Left ventricle myocardium inferior (tissue), 1 donor: ENCODE measurements at regions of chr22 and their contacts with region 1.

Region 1: DNA sequence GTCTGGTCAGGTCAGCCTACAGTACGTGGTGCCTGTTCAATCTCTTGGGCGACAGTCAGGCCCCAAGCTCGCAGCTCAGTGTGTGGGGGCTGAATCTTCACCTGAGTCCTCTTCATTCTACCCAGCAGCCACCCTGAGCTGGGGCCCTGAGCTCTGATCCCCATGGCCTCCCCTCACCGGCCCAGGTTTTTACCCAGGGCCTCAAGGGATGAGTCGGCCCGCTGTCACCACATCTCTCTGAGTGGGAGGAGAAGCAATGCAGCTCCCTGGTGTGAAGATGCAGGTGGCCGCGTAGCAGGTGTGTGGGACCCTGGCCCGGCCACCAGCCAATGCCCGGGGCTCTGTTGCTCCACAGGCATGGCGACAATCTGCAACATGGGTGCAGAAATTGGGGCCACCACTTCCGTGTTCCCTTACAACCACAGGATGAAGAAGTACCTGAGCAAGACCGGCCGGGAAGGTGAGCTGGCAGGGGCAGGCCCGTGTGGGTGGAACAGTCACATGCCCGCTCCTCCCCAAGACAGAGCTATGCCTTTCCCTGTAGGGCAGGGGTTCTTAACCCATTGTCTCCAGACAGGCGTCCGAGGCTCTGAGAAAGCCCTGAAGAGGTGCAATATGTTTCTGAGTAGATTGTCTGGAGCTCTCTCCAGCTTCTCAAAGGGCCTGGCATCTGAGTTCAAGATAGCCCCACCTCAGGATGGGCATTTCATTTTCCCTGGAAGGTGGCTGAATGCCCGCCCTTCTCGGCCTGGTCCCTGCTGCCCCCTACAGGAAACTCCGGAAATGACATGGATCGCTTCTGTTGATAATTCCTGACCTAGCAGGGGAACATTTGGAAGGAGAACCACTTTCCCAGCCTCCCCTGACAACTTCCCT is 26.9 kb downstream of the POLR3H start:
- DNase-seq: peak; percentile 61
- H3K4me3 ChIP-seq: no peak overlapping the region
- H3K27ac ChIP-seq: peak overlapping the region; percentile 92
- H3K4me1 ChIP-seq: peaks cover 68% of the 10 kb centered on the region
- H3K27me3 ChIP-seq: no peaks in the 10 kb centered on the region
- CTCF ChIP-seq: peak; percentile 90

Region 2: GRCh38 chr22:41403532-41404318 is 113.7 kb before region 1 on chr22:
- intact Hi-C with region 1: loop called (anchors 5 kb)
- DNase-seq: peak; percentile 91
- H3K4me3 ChIP-seq: no peak overlapping the region
- H3K27ac ChIP-seq: peak overlapping the region; percentile 87
- H3K4me1 ChIP-seq: peaks cover 34% of the 10 kb centered on the region
- H3K27me3 ChIP-seq: no peaks in the 10 kb centered on the region
- CTCF ChIP-seq: peak; percentile 99